ENCODE measurements at regions of chr3 and their contacts with region 1.

Region 1: GRCh38 chr3:134308350-134308891 is 57.8 kb upstream of the RYK start:
- DNase-seq: peak; percentile 91 to 92 (median 91)
- H3K4me3 ChIP-seq: no peak overlapping the region
- H3K27ac ChIP-seq: peak overlapping the region; percentile 7 to 51
- H3K4me1 ChIP-seq: peaks cover 4% of the 10 kb centered on the region
- H3K27me3 ChIP-seq: no peaks in the 10 kb centered on the region
- CTCF ChIP-seq: peak; percentile 96 to 100 (median 100)
- EP300 ChIP-seq: no peak
- POLR2A ChIP-seq: peak; percentile 31

Region 2: GRCh38 chr3:133927540-133928066 is 380.8 kb before region 1 on chr3:
- intact Hi-C with region 1: loop called in 1 of 4 experiments (anchors 10 kb)
- DNase-seq: peak; percentile 58 to 82 (median 73)
- H3K4me3 ChIP-seq: peak overlapping the region; percentile 47
- H3K27ac ChIP-seq: no peak overlapping the region
- H3K4me1 ChIP-seq: peaks cover 4% of the 10 kb centered on the region
- H3K27me3 ChIP-seq: no peaks in the 10 kb centered on the region
- CTCF ChIP-seq: peak; percentile 32 to 77 (median 73)
- EP300 ChIP-seq: no peak
- POLR2A ChIP-seq: no peak

Region 3: GRCh38 chr3:134212906-134213665 is 95.3 kb before region 1 on chr3:
- intact Hi-C with region 1: loop called in 2 of 4 experiments (anchors 2 to 5 kb)
- DNase-seq: peak; percentile 77 to 89 (median 88)
- H3K4me3 ChIP-seq: no peak overlapping the region
- H3K27ac ChIP-seq: no peak overlapping the region
- H3K4me1 ChIP-seq: peaks cover 8% of the 10 kb centered on the region
- H3K27me3 ChIP-seq: no peaks in the 10 kb centered on the region
- CTCF ChIP-seq: peak; percentile 93 to 98 (median 94)
- EP300 ChIP-seq: no peak
- POLR2A ChIP-seq: no peak

Region 4: DNA sequence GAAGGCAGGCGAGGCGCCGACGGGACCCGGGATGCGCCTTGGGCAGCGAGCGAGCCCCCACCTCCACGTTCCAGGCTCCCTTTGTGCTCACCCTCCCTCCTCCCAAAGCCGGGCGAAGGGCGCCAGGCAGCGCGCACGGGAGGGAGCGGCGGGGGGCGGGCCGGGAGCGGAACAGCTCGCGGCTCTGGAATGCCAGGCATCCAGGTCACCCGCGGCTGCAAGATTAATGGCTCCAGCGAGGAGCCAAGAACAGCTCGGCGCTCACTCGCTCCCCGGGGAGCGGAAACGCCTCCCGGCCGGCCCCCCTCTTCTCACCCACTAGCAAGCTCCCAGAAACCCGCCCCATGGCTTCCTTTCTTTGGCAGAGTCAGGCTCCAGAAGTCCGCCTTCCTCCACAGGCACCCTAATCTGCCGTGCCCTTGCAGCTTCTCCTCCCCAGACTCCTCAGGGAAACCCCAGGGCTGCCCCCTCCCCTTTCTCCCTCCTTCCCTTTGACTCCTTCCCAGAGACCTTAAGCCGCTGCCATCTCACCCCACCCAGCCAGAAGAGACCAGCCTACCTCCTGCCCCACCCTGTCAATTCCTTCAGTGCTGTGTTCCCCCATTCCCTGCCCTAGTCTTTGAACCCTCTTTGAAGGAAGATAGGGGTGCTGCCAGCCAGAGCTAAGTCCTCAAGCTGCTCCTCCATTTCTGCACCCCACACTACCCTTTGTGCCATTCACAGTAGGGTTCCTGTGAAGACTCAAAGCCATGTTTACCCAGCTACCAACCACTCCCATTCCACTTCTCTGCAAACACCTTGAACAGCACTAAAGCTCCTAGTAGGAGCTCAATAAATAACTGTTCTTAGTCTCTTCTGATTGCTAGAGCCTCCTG is 55.9 kb after region 1 on chr3:
- intact Hi-C with region 1: loop called in 1 of 4 experiments (anchors 2 kb)
- DNase-seq: peak; percentile 92 to 97 (median 94)
- H3K4me3 ChIP-seq: peak overlapping the region; percentile 26
- H3K27ac ChIP-seq: peak overlapping the region; percentile 51 to 72
- H3K4me1 ChIP-seq: peaks cover 28% of the 10 kb centered on the region
- H3K27me3 ChIP-seq: no peaks in the 10 kb centered on the region
- CTCF ChIP-seq: no peak
- EP300 ChIP-seq: no peak
- POLR2A ChIP-seq: no peak

Region 5: GRCh38 chr3:134473868-134474546 is 165.6 kb after region 1 on chr3:
- intact Hi-C with region 1: loop called (anchors 1 to 5 kb)
- DNase-seq: peak; percentile 65 to 87 (median 73)
- H3K4me3 ChIP-seq: no peak overlapping the region
- H3K27ac ChIP-seq: no peak overlapping the region
- H3K4me1 ChIP-seq: no peaks in the 10 kb centered on the region
- H3K27me3 ChIP-seq: no peaks in the 10 kb centered on the region
- CTCF ChIP-seq: peak; percentile 60 to 89 (median 87)
- EP300 ChIP-seq: no peak
- POLR2A ChIP-seq: no peak

Region 6: GRCh38 chr3:134709561-134710312 is 401.3 kb after region 1 on chr3:
- intact Hi-C with region 1: no loop called
- DNase-seq: peak in 2 of 5 donors; percentile 18 to 37
- H3K4me3 ChIP-seq: no peak overlapping the region
- H3K27ac ChIP-seq: no peak overlapping the region
- H3K4me1 ChIP-seq: peaks cover 3% of the 10 kb centered on the region
- H3K27me3 ChIP-seq: no peaks in the 10 kb centered on the region
- CTCF ChIP-seq: no peak
- EP300 ChIP-seq: no peak
- POLR2A ChIP-seq: no peak